CD8-positive, alpha-beta memory T cell (primary cell): ENCODE measurements at regions of chr5 and their contacts with region 1.

Region 1: GRCh38 chr5:69276422-69277174 is 41.9 kb downstream of the CDK7 start:
- DNase-seq: no peak
- H3K4me3 ChIP-seq: no peak overlapping the region
- H3K4me3 Mint-ChIP-seq: no peak overlapping the region
- H3K27ac ChIP-seq: no peak overlapping the region
- H3K27ac Mint-ChIP-seq: peak overlapping the region in 1 of 8 donors; percentile 43
- H3K4me1 ChIP-seq: no peaks in the 10 kb centered on the region
- H3K4me1 Mint-ChIP-seq: peaks cover 3 to 7% (median 4%) of the 10 kb centered on the region in 3 donors
- H3K27me3 ChIP-seq: no peaks in the 10 kb centered on the region
- H3K27me3 Mint-ChIP-seq: no peaks in the 10 kb centered on the region

Region 2: DNA sequence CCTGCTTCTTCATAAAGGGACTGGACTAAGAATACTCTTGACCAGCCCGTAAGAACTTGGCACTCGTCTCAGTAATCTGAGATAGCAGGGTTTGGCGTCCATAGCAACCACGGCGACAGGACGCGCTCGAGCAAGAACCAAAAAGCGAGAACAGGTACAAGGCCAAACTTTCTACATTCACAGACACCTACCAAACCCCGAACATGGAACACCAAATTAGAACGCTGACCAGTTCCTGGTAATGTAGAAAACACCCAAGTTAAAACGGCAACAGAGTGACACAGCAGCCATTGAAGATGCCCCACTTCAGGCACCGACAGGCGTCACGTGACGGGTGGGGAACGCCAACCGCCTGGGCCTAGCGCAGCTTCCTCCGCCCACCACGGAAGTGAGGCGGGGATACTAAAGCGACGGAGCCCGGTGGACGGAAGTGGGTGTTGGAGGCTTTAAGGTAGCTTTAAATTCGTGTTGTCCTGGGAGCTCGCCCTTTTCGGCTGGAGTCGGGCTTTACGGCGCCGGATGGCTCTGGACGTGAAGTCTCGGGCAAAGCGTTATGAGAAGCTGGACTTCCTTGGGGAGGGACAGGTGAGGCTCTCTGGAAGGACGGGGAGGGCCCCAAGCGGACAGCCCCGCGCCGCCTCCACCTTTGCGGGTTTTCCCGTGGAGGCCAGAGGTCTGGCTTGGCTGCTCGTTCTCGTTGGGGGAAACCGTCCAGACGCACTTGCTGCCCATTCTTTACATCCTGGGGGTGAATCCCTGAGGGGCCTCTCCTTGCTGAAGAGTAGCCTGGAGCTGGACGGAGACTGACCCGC is 41.9 kb before region 1 on chr5 and contains the start of gene CDK7:
- CTCF ChIA-PET with region 1: no interaction called
- POLR2A ChIA-PET with region 1: no interaction called
- DNase-seq: peak; percentile 87 to 94 (median 90)
- H3K4me3 ChIP-seq: peak within 1 kb of the TSS; percentile 89
- H3K4me3 Mint-ChIP-seq: peak within 1 kb of the TSS; percentile 96 to 99 (median 98)
- H3K27ac ChIP-seq: peak within 1 kb of the TSS; percentile 84
- H3K27ac Mint-ChIP-seq: peak within 1 kb of the TSS; percentile 87 to 98 (median 96)
- H3K4me1 ChIP-seq: peaks cover 17% of the 10 kb centered on the region
- H3K4me1 Mint-ChIP-seq: peaks cover 35 to 50% (median 50%) of the 10 kb centered on the region in 3 donors
- H3K27me3 ChIP-seq: no peaks in the 10 kb centered on the region
- H3K27me3 Mint-ChIP-seq: no peaks in the 10 kb centered on the region
- total RNA-seq, gene CDK7: 40.8 to 44.8 TPM

Region 3: DNA sequence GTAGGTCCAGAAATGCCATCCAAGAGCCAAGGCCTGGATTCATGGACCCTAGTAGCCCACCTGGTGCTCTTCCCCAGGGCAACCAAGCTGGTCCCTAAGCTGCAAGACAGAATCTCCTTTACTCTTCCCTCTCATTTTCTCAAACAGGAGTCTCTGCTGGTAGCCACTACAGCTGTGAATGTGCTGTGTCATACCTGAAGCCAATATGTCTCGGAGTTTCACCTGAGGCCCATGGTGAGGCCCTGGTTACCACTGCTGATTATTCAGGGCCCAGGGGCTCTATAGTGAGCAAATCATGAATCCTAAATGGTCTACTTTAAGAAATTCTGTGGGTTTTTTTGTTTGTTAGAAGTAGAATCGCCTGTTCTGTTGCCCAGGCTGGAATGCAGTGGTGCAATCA is 26.0 kb before region 1 on chr5:
- CTCF ChIA-PET with region 1: no interaction called
- POLR2A ChIA-PET with region 1: no interaction called
- DNase-seq: no peak
- H3K4me3 ChIP-seq: no peak overlapping the region
- H3K4me3 Mint-ChIP-seq: no peak overlapping the region
- H3K27ac ChIP-seq: no peak overlapping the region
- H3K27ac Mint-ChIP-seq: peak overlapping the region in 1 of 8 donors; percentile 19
- H3K4me1 ChIP-seq: no peaks in the 10 kb centered on the region
- H3K4me1 Mint-ChIP-seq: peaks cover 21 to 36% (median 34%) of the 10 kb centered on the region in 3 donors
- H3K27me3 ChIP-seq: no peaks in the 10 kb centered on the region
- H3K27me3 Mint-ChIP-seq: no peaks in the 10 kb centered on the region

Region 4: GRCh38 chr5:69261034-69261433 is 15.6 kb before region 1 on chr5:
- CTCF ChIA-PET with region 1: no interaction called
- POLR2A ChIA-PET with region 1: no interaction called
- DNase-seq: no peak
- H3K4me3 ChIP-seq: no peak overlapping the region
- H3K4me3 Mint-ChIP-seq: no peak overlapping the region
- H3K27ac ChIP-seq: no peak overlapping the region
- H3K27ac Mint-ChIP-seq: peak overlapping the region in 1 of 8 donors; percentile 72
- H3K4me1 ChIP-seq: no peaks in the 10 kb centered on the region
- H3K4me1 Mint-ChIP-seq: no peaks in the 10 kb centered on the region
- H3K27me3 ChIP-seq: no peaks in the 10 kb centered on the region
- H3K27me3 Mint-ChIP-seq: no peaks in the 10 kb centered on the region

Region 5: GRCh38 chr5:69350664-69351063 is 74.1 kb after region 1 on chr5:
- CTCF ChIA-PET with region 1: no interaction called
- POLR2A ChIA-PET with region 1: interaction called, 12 read pairs
- DNase-seq: no peak
- H3K4me3 ChIP-seq: no peak overlapping the region
- H3K4me3 Mint-ChIP-seq: no peak overlapping the region
- H3K27ac ChIP-seq: no peak overlapping the region
- H3K27ac Mint-ChIP-seq: no peak overlapping the region
- H3K4me1 ChIP-seq: no peaks in the 10 kb centered on the region
- H3K4me1 Mint-ChIP-seq: peaks cover 2 to 3% (median 2%) of the 10 kb centered on the region in 3 donors
- H3K27me3 ChIP-seq: no peaks in the 10 kb centered on the region
- H3K27me3 Mint-ChIP-seq: no peaks in the 10 kb centered on the region